Lower lobe of right lung (tissue), 2 donors: ENCODE measurements at regions of chr6 and their contacts with region 1.

Region 1: GRCh38 chr6:106085984-106086813 is at the start of gene PRDM1:
- DNase-seq: peak; percentile 94
- ATAC-seq: peak; percentile 95
- H3K4me3 ChIP-seq: peak within 1 kb of the TSS; percentile 60
- H3K27ac ChIP-seq: peak within 1 kb of the TSS; percentile 79
- H3K4me1 ChIP-seq: peaks cover 40% of the 10 kb centered on the region
- H3K27me3 ChIP-seq: peaks cover 13% of the 10 kb centered on the region
- CTCF ChIP-seq: peak; percentile 33
- total RNA-seq, gene PRDM1: 13.9 TPM

Region 2: GRCh38 chr6:105992315-105992961 is 93.8 kb before region 1 on chr6:
- intact Hi-C with region 1: loop called (anchors 5 kb)
- DNase-seq: peak; percentile 89
- ATAC-seq: peak; percentile 96 to 99
- H3K4me3 ChIP-seq: peak overlapping the region; percentile 77
- H3K27ac ChIP-seq: peak overlapping the region; percentile 59
- H3K4me1 ChIP-seq: peaks cover 24% of the 10 kb centered on the region
- H3K27me3 ChIP-seq: peaks cover 73% of the 10 kb centered on the region
- CTCF ChIP-seq: no peak